ENCODE measurements at regions of chr14 and their contacts with region 1.

Region 1: DNA sequence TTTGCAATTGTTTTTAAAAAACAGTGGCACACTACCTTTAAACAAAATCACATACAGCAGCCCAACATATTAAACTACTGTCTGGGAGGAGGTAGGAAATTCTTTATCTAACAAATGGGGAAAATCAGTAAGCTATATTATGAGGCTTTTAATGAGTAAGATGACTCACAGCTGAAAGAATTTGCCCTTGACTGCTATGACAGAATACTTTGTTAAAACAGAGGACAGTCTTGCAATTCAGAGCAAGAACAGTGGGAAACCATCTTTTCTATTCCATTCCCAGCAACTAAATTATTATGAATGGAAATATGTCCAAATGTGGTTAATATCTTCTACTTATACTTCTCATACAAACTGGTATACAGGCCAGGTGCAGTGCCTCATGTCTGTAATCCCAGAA is 49.2 kb upstream of the SGPP1 start:
- DNase-seq: peak; percentile 72
- ATAC-seq: peak; percentile 90
- H3K4me3 ChIP-seq: no peak overlapping the region
- H3K27ac ChIP-seq: no peak overlapping the region
- H3K4me1 ChIP-seq: peaks cover 17% of the 10 kb centered on the region
- H3K27me3 ChIP-seq: no peaks in the 10 kb centered on the region
- CTCF ChIP-seq: no peak

Region 2: DNA sequence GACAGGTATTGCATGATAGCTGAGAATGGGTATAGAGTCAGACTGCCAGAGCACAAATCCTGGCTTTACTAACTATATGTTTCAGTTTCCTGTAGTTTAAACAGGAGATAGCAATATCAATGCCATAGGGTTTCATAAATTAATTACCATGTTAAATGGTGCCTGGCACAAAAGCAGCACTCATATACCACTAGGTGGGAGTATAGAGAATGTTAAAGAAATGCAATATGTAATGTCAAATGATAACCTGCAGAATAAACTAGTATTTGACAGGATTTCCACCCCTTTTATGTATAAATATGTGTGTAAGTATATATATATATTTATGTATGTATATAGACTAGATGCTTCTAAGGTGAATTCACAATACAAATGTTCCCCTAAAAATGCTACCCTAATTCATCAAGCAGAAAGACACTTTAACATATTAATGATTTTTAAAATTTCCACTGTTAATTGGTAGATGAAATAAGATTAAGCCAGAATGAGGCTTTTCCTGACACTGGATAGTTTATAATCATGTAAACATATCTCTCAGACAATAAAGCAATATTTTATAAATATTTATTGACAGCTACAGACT is 144.0 kb before region 1 on chr14:
- CTCF ChIA-PET with region 1: interaction called, 10 read pairs
- POLR2A ChIA-PET with region 1: no interaction called
- intact Hi-C with region 1: no loop called
- DNase-seq: peak; percentile 71
- ATAC-seq: peak; percentile 88
- H3K4me3 ChIP-seq: no peak overlapping the region
- H3K27ac ChIP-seq: no peak overlapping the region
- H3K4me1 ChIP-seq: 0 out of 2 replicates have a peak, but pooled peaks cover 4% of the 10 kb centered on the region
- H3K27me3 ChIP-seq: no peaks in the 10 kb centered on the region
- CTCF ChIP-seq: peak; percentile 82

Region 3: DNA sequence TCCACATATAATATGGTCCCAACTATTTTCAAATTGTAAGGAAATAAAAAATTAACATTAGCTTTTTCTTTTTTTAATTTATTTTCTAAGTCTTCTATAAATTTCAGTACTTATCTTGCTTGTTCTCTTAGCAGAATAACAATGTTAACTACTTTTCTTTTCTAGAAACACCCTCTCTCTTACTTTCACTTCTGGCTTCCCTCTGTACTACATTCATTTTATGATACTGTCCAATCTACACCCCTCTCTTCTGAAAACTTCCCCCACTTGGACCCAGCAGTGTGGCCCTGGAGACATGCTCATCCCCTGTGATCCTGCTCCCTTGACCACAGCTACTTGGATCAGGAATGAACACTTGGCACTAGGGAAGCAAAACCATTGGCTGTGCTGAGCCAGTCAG is 64.9 kb before region 1 on chr14:
- CTCF ChIA-PET with region 1: no interaction called
- POLR2A ChIA-PET with region 1: no interaction called
- intact Hi-C with region 1: no loop called
- DNase-seq: no peak
- ATAC-seq: no peak
- H3K4me3 ChIP-seq: no peak overlapping the region
- H3K27ac ChIP-seq: no peak overlapping the region
- H3K4me1 ChIP-seq: peaks cover 15% of the 10 kb centered on the region
- H3K27me3 ChIP-seq: no peaks in the 10 kb centered on the region
- CTCF ChIP-seq: no peak